Caco-2 (cell line): ENCODE measurements at regions of chr7 and their contacts with region 1.

Region 1: GRCh38 chr7:69803699-69804516 is 205.6 kb downstream of the AUTS2 start:
- DNase-seq: no peak
- H3K4me3 ChIP-seq: no peak overlapping the region
- H3K4me3 Mint-ChIP-seq: no peak overlapping the region
- H3K27ac Mint-ChIP-seq: no peak overlapping the region
- H3K4me1 ChIP-seq: peaks cover 55% of the 10 kb centered on the region
- H3K4me1 Mint-ChIP-seq: peaks cover 40% of the 10 kb centered on the region
- H3K27me3 ChIP-seq: no peaks in the 10 kb centered on the region; the same call in 1 of the 2 replicates
- H3K27me3 Mint-ChIP-seq: no peaks in the 10 kb centered on the region
- CTCF ChIP-seq: no peak

Region 2: GRCh38 chr7:69598081-69598486 is 205.8 kb before region 1 on chr7 and contains the start of gene AUTS2:
- CTCF ChIA-PET with region 1: no interaction called
- POLR2A ChIA-PET with region 1: no interaction called
- intact Hi-C with region 1: loop called (anchors 10 kb)
- DNase-seq: peak; percentile 77 to 82
- H3K4me3 ChIP-seq: peak within 1 kb of the TSS; percentile 57
- H3K4me3 Mint-ChIP-seq: peak within 1 kb of the TSS; percentile 83
- H3K27ac Mint-ChIP-seq: no peak within 1 kb of the TSS
- H3K4me1 ChIP-seq: peaks cover 13% of the 10 kb centered on the region
- H3K4me1 Mint-ChIP-seq: peaks cover 4% of the 10 kb centered on the region
- H3K27me3 ChIP-seq: no peaks in the 10 kb centered on the region
- H3K27me3 Mint-ChIP-seq: peaks cover 6% of the 10 kb centered on the region
- CTCF ChIP-seq: no peak
- total RNA-seq, gene AUTS2: 37.1 and 41.9 TPM in 2 replicates

Region 3: GRCh38 chr7:69677054-69677852 is 126.7 kb before region 1 on chr7:
- CTCF ChIA-PET with region 1: no interaction called
- POLR2A ChIA-PET with region 1: no interaction called
- intact Hi-C with region 1: loop called (anchors 10 kb)
- DNase-seq: no peak
- H3K4me3 ChIP-seq: no peak overlapping the region
- H3K4me3 Mint-ChIP-seq: no peak overlapping the region
- H3K27ac Mint-ChIP-seq: no peak overlapping the region
- H3K4me1 ChIP-seq: no peaks in the 10 kb centered on the region
- H3K4me1 Mint-ChIP-seq: no peaks in the 10 kb centered on the region
- H3K27me3 ChIP-seq: no peaks in the 10 kb centered on the region
- H3K27me3 Mint-ChIP-seq: no peaks in the 10 kb centered on the region
- CTCF ChIP-seq: peak; percentile 12 to 57

Region 4: GRCh38 chr7:69749372-69750106 is 54.4 kb before region 1 on chr7:
- CTCF ChIA-PET with region 1: no interaction called
- POLR2A ChIA-PET with region 1: no interaction called
- intact Hi-C with region 1: loop called (anchors 1 kb)
- DNase-seq: no peak
- H3K4me3 ChIP-seq: no peak overlapping the region
- H3K4me3 Mint-ChIP-seq: no peak overlapping the region
- H3K27ac Mint-ChIP-seq: peak overlapping the region; percentile 39
- H3K4me1 ChIP-seq: peaks cover 21% of the 10 kb centered on the region
- H3K4me1 Mint-ChIP-seq: peaks cover 41% of the 10 kb centered on the region
- H3K27me3 ChIP-seq: no peaks in the 10 kb centered on the region
- H3K27me3 Mint-ChIP-seq: no peaks in the 10 kb centered on the region
- CTCF ChIP-seq: no peak

Region 5: DNA sequence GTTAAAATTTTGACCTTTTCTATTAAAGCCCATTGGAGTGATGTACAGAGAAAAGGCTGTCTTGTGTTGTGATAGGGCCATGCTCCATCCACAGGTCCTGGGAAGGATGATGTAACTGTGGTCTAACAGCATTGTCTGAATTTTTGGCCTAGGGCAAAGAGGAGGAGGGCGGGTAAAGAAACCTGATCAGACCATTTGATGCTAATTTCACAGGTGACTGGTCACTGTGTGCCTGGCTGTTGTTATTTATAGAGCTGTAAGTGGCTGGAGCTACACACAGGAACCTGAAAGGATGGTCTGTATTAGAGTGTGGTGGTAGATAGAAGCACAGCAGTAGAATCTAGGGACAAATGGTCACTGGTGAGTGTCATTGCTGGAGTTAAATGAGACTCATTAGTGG is 23.5 kb before region 1 on chr7:
- CTCF ChIA-PET with region 1: no interaction called
- POLR2A ChIA-PET with region 1: no interaction called
- intact Hi-C with region 1: loop called (anchors 1 kb)
- DNase-seq: peak; percentile 75 to 81
- H3K4me3 ChIP-seq: no peak overlapping the region
- H3K4me3 Mint-ChIP-seq: no peak overlapping the region
- H3K27ac Mint-ChIP-seq: peak overlapping the region; percentile 69
- H3K4me1 ChIP-seq: peaks cover 15% of the 10 kb centered on the region
- H3K4me1 Mint-ChIP-seq: peaks cover 23% of the 10 kb centered on the region
- H3K27me3 ChIP-seq: no peaks in the 10 kb centered on the region
- H3K27me3 Mint-ChIP-seq: no peaks in the 10 kb centered on the region
- CTCF ChIP-seq: no peak

Region 6: GRCh38 chr7:69790977-69791724 is 12.8 kb before region 1 on chr7:
- CTCF ChIA-PET with region 1: no interaction called
- POLR2A ChIA-PET with region 1: no interaction called
- intact Hi-C with region 1: no loop called
- DNase-seq: no peak
- H3K4me3 ChIP-seq: no peak overlapping the region
- H3K4me3 Mint-ChIP-seq: no peak overlapping the region
- H3K27ac Mint-ChIP-seq: no peak overlapping the region
- H3K4me1 ChIP-seq: no peaks in the 10 kb centered on the region
- H3K4me1 Mint-ChIP-seq: no peaks in the 10 kb centered on the region
- H3K27me3 ChIP-seq: no peaks in the 10 kb centered on the region
- H3K27me3 Mint-ChIP-seq: no peaks in the 10 kb centered on the region
- CTCF ChIP-seq: no peak

Region 7: GRCh38 chr7:69816501-69816900 is 12.6 kb after region 1 on chr7:
- CTCF ChIA-PET with region 1: interaction called, 3 read pairs
- POLR2A ChIA-PET with region 1: no interaction called
- intact Hi-C with region 1: loop called (anchors 1 kb)
- DNase-seq: peak in 1 of 2 experiments; percentile 16
- H3K4me3 ChIP-seq: no peak overlapping the region
- H3K4me3 Mint-ChIP-seq: peak overlapping the region; percentile 27
- H3K27ac Mint-ChIP-seq: peak overlapping the region; percentile 15
- H3K4me1 ChIP-seq: peaks cover 32% of the 10 kb centered on the region
- H3K4me1 Mint-ChIP-seq: peaks cover 27% of the 10 kb centered on the region
- H3K27me3 ChIP-seq: no peaks in the 10 kb centered on the region
- H3K27me3 Mint-ChIP-seq: no peaks in the 10 kb centered on the region
- CTCF ChIP-seq: no peak

Region 8: GRCh38 chr7:69837387-69838068 is 33.6 kb after region 1 on chr7:
- CTCF ChIA-PET with region 1: no interaction called
- POLR2A ChIA-PET with region 1: no interaction called
- intact Hi-C with region 1: no loop called
- DNase-seq: no peak
- H3K4me3 ChIP-seq: no peak overlapping the region
- H3K4me3 Mint-ChIP-seq: no peak overlapping the region
- H3K27ac Mint-ChIP-seq: no peak overlapping the region
- H3K4me1 ChIP-seq: no peaks in the 10 kb centered on the region
- H3K4me1 Mint-ChIP-seq: no peaks in the 10 kb centered on the region
- H3K27me3 ChIP-seq: no peaks in the 10 kb centered on the region
- H3K27me3 Mint-ChIP-seq: peaks cover 14% of the 10 kb centered on the region
- CTCF ChIP-seq: no peak

Region 9: DNA sequence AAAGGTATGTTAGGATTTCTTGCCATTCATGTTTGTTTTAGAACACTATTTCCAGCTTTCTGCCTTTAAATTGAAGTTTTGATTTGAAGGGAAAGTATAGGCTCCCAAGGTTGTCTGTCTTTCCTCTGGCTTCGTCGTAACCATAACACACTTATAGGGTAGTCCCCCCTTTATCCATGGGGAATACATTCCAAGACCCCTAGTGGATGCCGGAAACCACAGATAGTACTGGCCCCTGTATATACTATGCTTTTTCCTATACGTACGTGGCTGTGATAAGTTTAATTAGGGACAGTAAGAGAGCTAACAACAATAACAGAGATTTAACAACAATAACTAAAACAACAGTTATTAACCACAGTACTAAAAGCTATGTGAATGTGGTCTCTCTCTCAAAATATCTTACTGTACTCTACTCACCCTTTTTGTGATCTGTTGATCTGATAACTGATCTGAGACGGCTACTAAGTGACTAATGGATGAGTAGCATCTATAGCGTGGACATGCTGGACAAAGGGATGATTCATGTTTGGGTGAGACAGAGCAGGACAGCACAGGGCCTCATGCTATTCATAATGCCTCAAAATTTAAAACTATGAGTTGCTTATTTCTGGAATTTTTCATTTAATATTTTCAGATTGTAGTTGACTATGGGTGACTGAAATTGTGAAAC is 67.4 kb after region 1 on chr7:
- CTCF ChIA-PET with region 1: no interaction called
- POLR2A ChIA-PET with region 1: no interaction called
- intact Hi-C with region 1: loop called (anchors 10 kb)
- DNase-seq: no peak
- H3K4me3 ChIP-seq: no peak overlapping the region
- H3K4me3 Mint-ChIP-seq: no peak overlapping the region
- H3K27ac Mint-ChIP-seq: no peak overlapping the region
- H3K4me1 ChIP-seq: 0 out of 2 replicates have a peak, but pooled peaks cover 3% of the 10 kb centered on the region
- H3K4me1 Mint-ChIP-seq: no peaks in the 10 kb centered on the region
- H3K27me3 ChIP-seq: no peaks in the 10 kb centered on the region
- H3K27me3 Mint-ChIP-seq: peaks cover 8% of the 10 kb centered on the region
- CTCF ChIP-seq: no peak

Region 10: DNA sequence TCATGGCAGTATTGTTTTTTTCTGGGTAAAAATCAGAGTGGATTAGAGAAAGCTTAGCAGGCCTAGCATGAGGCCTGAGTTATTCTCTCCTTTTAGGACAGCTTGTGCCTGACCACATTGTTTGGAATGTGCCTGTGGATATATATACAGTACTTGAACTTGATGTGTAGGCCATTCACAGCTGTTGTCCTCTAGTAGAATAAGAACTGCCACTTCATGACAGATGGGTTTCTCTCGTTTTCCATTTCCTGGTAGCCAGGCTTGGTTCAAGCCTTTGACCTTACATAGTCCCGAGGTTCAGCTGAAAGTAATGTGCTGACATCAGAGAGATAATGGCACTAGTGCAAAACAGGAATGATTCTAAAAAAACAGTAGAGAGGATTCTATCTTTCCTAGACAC is 268.3 kb after region 1 on chr7:
- CTCF ChIA-PET with region 1: no interaction called
- POLR2A ChIA-PET with region 1: no interaction called
- intact Hi-C with region 1: no loop called
- DNase-seq: no peak
- H3K4me3 ChIP-seq: no peak overlapping the region
- H3K4me3 Mint-ChIP-seq: no peak overlapping the region
- H3K27ac Mint-ChIP-seq: no peak overlapping the region
- H3K4me1 ChIP-seq: no peaks in the 10 kb centered on the region
- H3K4me1 Mint-ChIP-seq: no peaks in the 10 kb centered on the region
- H3K27me3 ChIP-seq: no peaks in the 10 kb centered on the region
- H3K27me3 Mint-ChIP-seq: no peaks in the 10 kb centered on the region
- CTCF ChIP-seq: no peak